Right cardiac atrium (tissue), 5 donors: ENCODE measurements at regions of chr6 and their contacts with region 1.

Region 1: DNA sequence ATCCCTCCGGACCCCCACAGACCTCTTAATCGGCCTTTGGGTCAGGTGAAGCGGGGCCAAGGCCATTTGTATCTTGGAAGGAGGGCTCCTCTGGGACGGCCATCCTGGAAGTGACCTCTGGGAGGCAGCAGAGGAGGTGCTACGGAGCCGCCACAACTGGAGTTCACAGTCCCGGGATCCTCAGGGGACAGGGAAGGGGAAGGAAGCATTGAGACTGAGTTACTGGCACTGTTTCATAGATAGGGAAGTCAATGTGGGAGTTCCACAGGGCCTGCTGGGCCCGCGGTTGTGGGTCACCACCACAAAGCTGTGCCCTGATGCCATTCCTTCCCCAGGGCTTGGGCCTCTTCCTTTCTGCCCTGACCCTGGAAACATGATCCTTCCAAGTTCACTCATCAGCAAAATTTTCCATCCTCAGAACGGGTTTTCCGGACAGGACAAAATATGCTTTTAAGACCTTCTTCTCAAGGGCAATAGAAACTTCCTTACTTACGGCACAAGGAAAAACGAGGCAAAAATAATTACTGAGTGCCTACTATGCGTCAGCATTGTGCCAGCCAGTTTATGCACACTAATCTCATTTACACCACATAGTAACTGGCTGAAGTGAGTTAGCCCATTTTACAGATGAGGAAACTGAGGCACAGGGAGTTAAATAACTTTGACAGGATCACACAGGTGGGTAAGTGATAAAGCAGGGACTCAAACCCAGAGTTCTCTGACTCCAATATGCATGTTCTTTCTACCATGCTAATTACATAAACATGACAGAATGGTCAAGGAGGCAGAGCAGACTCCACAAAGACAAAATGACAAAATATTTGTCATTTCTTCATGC is 143.8 kb downstream of the UNC5CL start:
- DNase-seq: peak; percentile 55 to 86 (median 76)
- ATAC-seq: peak; percentile 87 to 89
- H3K4me3 ChIP-seq: no peak overlapping the region
- H3K27ac ChIP-seq: peak overlapping the region; percentile 37
- H3K4me1 ChIP-seq: peaks cover 10% of the 10 kb centered on the region
- H3K27me3 ChIP-seq: no peaks in the 10 kb centered on the region

Region 2: DNA sequence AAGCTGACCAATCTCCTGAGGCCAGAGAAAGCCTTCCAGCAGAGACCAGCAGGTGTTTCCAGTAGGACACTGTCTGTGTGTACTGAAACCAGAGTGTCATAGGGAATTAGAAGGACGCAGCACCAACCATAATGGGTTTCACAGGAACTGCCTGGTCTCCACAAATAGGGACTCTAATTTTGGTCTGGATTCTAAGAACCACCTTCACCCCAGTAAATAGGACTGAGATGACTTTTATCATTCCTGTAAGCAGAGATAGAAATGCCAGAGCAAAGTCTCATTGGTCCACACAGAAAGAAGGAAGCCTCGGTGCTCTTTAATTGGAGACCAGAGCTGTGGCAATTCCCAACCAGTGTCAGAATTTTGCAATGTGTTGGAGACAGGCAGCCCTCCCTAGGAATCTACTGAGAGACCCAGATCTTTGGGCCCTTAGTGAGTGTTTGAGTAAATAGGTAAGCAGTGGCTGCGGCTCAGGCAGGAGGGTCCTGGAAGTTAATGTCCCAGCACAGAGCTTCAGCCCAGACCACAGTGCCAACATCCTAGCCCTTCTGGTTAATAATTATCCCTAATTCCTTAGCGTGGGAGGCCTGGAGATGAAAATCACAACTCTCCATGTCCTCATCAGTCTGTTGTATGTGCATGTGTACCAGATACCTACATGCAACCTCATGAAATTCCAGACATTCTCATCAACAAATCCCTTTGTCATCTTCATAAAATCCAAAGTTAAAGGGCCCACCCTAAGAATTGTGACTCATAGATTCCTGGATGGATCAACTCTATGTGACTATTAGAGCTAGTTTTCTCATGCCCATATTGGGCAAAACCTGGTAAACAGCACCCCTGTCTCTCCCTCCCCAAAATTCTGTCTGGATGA is 62.7 kb after region 1 on chr6:
- intact Hi-C with region 1: no loop called
- DNase-seq: no peak
- ATAC-seq: no peak
- H3K4me3 ChIP-seq: no peak overlapping the region
- H3K27ac ChIP-seq: no peak overlapping the region
- H3K4me1 ChIP-seq: no peaks in the 10 kb centered on the region
- H3K27me3 ChIP-seq: no peaks in the 10 kb centered on the region

Region 3: DNA sequence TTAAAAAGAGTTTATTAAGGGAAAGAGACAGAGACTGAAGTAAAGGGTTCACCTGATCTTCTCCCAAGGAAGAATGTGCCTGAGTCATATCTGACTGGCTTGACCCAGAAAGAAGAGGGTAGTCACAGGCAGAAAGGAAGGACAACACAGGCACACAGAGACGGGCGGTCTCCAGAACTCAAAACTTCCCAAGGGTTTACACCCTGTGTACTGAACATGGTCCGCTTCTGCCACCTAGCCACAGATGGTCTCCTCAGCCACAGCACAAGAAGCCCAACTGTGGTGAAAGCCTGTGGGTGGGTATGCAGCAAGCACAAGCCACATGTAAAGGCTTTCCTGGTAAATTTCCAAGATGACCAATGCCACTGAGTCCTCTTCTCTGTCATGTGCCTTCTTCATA is 126.7 kb after region 1 on chr6:
- intact Hi-C with region 1: loop called in 3 of 4 experiments (anchors 5 to 10 kb)
- DNase-seq: no peak
- ATAC-seq: peak in 1 of 2 donors; percentile 73
- H3K4me3 ChIP-seq: no peak overlapping the region
- H3K27ac ChIP-seq: no peak overlapping the region
- H3K4me1 ChIP-seq: no peaks in the 10 kb centered on the region
- H3K27me3 ChIP-seq: no peaks in the 10 kb centered on the region

Region 4: DNA sequence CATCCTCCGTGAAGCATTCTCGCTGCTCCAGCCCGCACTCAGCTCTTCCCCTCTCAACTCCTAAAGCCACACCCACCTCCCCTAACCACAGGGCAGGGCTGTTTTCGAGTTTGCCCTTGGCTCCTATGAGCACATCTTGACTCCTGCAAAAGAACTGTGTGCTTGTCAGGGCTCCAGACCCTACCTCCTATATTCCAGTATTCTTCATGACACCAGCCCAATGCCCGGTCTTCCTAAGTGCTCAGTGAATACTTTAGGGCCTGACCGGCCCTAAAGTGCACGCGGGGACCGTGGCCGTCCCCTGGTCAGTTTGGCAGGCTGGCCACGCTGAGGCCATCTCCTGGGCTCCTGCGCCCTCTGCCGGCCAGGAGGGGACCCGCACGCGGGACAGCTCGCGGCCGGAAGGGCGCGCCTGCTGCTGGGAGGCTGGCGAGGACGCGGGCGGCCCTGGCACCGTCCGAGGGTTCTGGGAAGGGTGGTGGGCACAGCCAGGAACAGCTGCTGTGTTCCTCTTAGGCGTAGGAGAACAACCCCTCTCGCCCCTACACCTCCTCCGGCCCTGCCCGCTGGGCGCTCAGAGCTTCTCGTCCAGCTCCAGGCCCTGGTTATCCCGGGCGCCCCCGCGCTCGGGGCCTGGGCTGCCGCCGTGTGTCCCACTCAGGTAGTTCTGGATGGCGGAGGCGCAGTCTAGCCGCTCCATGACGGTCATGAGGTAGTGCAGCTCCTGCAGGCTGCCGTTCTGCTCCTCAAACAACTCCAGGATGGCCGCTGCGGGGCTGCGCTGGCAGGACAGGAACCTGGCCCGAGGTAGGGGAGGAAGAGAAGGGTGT is 132.8 kb after region 1 on chr6:
- intact Hi-C with region 1: loop called in 3 of 4 experiments (anchors 5 to 10 kb)
- DNase-seq: peak; percentile 89 to 97 (median 95)
- ATAC-seq: peak; percentile 96 to 97
- H3K4me3 ChIP-seq: peak overlapping the region; percentile 41
- H3K27ac ChIP-seq: peak overlapping the region; percentile 31
- H3K4me1 ChIP-seq: no peaks in the 10 kb centered on the region
- H3K27me3 ChIP-seq: no peaks in the 10 kb centered on the region